IMR-90 (cell line): ENCODE measurements at regions of chr5 and their contacts with region 1.

Region 1: GRCh38 chr5:39074016-39074886 is at the start of gene RICTOR:
- DNase-seq: peak; percentile 82
- ATAC-seq: peak; percentile 92
- H3K4me3 ChIP-seq: peak within 1 kb of the TSS; percentile 97
- H3K27ac ChIP-seq: peak within 1 kb of the TSS; percentile 99
- H3K4me1 ChIP-seq: no peaks in the 10 kb centered on the region
- H3K27me3 ChIP-seq: no peaks in the 10 kb centered on the region
- CTCF ChIP-seq: no peak
- POLR2A ChIP-seq: peak; percentile 82
- RAD21 ChIP-seq: no peak
- total RNA-seq, gene RICTOR: 35.7 and 45.0 TPM in 2 replicates

Region 2: GRCh38 chr5:38845526-38846378 is 228.5 kb before region 1 on chr5 and contains the start of gene OSMR:
- CTCF ChIA-PET with region 1: no interaction called
- POLR2A ChIA-PET with region 1: no interaction called
- dilution Hi-C with region 1: no loop called
- in situ Hi-C with region 1: no loop called
- intact Hi-C with region 1: loop called (anchors 10 kb)
- DNase-seq: peak; percentile 98
- ATAC-seq: peak; percentile 95
- H3K4me3 ChIP-seq: peak within 1 kb of the TSS; percentile 93
- H3K27ac ChIP-seq: peak within 1 kb of the TSS; percentile 99
- H3K4me1 ChIP-seq: peaks cover 12% of the 10 kb centered on the region
- H3K27me3 ChIP-seq: no peaks in the 10 kb centered on the region
- CTCF ChIP-seq: no peak
- POLR2A ChIP-seq: peak; percentile 91
- RAD21 ChIP-seq: peak; percentile 1; the same call in 1 of the 2 replicates
- total RNA-seq, gene OSMR: 38.9 and 41.6 TPM in 2 replicates

Region 3: DNA sequence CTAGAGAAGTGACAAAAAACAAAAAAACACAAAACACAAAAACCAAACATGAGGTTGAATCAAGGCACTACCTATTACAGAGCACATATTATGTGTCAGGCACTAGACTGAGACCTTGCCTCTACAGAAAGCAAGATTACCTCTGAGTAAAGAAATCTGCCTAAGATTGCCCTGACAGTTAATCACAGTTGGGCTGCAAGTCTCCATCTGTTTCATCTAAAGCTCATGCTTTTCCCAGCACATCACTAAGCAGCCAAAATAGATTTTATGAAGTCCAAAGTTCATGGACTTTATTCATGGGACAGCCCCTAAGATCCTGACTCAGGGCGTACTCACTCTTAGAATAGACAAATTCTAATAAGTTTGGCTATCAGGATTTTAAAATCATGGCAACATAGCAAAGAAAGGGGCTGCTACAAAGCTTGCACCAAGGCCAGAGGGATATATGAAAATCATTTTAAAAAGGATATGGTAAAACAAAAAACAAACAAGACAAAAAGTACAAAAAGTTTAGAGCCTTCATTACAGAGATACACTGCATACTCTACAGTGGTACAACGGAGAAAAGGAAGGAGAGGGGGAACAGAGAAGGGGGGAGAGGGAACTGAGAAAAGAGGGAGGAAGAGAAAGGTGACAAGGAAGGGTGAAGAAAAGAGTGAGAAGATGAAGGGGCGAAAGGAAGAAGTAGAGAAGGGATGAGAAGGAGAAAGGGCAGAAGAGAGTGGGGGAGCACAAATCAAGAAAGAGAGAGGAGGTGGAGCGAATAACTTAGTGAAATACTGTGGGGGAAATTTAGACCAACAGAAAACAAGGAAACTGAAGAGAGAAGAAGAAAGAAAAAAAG is 58.3 kb before region 1 on chr5:
- CTCF ChIA-PET with region 1: no interaction called
- POLR2A ChIA-PET with region 1: no interaction called
- dilution Hi-C with region 1: no loop called
- in situ Hi-C with region 1: no loop called
- intact Hi-C with region 1: loop called (anchors 2 kb)
- DNase-seq: peak; percentile 90
- ATAC-seq: peak; percentile 77
- H3K4me3 ChIP-seq: no peak overlapping the region
- H3K27ac ChIP-seq: peak overlapping the region; percentile 50
- H3K4me1 ChIP-seq: peaks cover 5% of the 10 kb centered on the region
- H3K27me3 ChIP-seq: no peaks in the 10 kb centered on the region
- CTCF ChIP-seq: no peak
- POLR2A ChIP-seq: no peak
- RAD21 ChIP-seq: no peak

Region 4: GRCh38 chr5:39031041-39031440 is 43.2 kb before region 1 on chr5:
- CTCF ChIA-PET with region 1: no interaction called
- POLR2A ChIA-PET with region 1: no interaction called
- dilution Hi-C with region 1: no loop called
- in situ Hi-C with region 1: no loop called
- intact Hi-C with region 1: no loop called
- DNase-seq: no peak
- ATAC-seq: no peak
- H3K4me3 ChIP-seq: no peak overlapping the region
- H3K27ac ChIP-seq: no peak overlapping the region
- H3K4me1 ChIP-seq: peaks cover 7% of the 10 kb centered on the region; the same call in 1 of the 2 replicates
- H3K27me3 ChIP-seq: no peaks in the 10 kb centered on the region
- CTCF ChIP-seq: no peak
- POLR2A ChIP-seq: no peak
- RAD21 ChIP-seq: no peak

Region 5: DNA sequence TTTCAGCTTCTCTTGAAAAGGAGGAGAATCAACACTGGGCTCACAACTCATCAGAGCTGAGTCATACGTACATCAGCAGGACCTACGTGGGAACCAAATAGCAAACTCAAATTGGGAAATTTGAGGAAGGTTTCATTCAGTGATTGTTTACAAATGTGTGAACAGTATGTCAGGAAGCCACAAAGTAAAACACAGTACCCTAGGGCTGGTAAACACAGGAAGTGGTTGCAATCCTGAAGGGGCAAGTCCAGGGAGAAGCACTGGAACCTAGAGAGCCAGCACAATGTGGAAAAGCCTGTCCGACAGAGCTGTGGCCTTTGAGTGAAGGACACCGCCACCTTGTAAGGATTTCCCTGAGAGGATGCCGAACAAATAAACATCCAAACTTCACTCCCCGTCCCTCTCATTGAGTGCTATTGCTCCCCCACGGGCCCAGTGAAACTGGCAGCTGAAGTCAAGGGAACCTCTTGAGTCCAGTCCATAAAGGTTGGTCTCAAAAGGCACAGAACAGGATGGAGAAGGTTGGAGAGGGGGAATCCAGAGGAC is 26.7 kb after region 1 on chr5:
- CTCF ChIA-PET with region 1: interaction called, 3 read pairs
- POLR2A ChIA-PET with region 1: no interaction called
- dilution Hi-C with region 1: no loop called
- in situ Hi-C with region 1: no loop called
- intact Hi-C with region 1: loop called (anchors 1 kb)
- DNase-seq: peak; percentile 99
- ATAC-seq: peak; percentile 92
- H3K4me3 ChIP-seq: no peak overlapping the region
- H3K27ac ChIP-seq: peak overlapping the region; percentile 99
- H3K4me1 ChIP-seq: peaks cover 16% of the 10 kb centered on the region
- H3K27me3 ChIP-seq: no peaks in the 10 kb centered on the region
- CTCF ChIP-seq: no peak
- POLR2A ChIP-seq: no peak; the same call in 1 of the 2 replicates
- RAD21 ChIP-seq: peak; percentile 6; the same call in 1 of the 2 replicates